ENCODE measurements at regions of chr11 and their contacts with region 1.

Region 1: DNA sequence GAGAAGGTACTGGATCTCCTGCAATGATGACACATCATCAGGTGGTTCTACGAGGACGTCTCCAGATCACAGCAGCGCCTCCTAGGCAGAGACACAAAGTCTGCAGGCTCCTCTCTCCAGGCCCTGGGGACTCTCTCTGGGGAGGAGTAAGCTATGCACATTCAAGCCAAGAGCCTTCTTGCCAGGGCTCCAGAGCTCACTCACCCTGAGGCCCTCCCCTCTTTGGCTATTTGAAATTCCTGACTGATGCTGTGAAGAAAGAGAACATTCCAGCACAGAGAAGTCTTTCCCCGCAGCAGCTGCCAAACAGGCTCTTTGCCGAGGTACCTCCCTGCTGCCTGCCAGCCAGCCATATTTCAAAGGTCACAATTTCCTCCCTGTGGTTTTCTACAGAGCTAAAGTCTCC is 204.9 kb downstream of the CSNK2A3 start:
- DNase-seq: no peak
- ATAC-seq: no peak
- H3K4me3 Mint-ChIP-seq: no peak overlapping the region
- H3K27ac Mint-ChIP-seq: no peak overlapping the region
- H3K4me1 Mint-ChIP-seq: peaks cover 39% of the 10 kb centered on the region
- H3K27me3 Mint-ChIP-seq: no peaks in the 10 kb centered on the region

Region 2: DNA sequence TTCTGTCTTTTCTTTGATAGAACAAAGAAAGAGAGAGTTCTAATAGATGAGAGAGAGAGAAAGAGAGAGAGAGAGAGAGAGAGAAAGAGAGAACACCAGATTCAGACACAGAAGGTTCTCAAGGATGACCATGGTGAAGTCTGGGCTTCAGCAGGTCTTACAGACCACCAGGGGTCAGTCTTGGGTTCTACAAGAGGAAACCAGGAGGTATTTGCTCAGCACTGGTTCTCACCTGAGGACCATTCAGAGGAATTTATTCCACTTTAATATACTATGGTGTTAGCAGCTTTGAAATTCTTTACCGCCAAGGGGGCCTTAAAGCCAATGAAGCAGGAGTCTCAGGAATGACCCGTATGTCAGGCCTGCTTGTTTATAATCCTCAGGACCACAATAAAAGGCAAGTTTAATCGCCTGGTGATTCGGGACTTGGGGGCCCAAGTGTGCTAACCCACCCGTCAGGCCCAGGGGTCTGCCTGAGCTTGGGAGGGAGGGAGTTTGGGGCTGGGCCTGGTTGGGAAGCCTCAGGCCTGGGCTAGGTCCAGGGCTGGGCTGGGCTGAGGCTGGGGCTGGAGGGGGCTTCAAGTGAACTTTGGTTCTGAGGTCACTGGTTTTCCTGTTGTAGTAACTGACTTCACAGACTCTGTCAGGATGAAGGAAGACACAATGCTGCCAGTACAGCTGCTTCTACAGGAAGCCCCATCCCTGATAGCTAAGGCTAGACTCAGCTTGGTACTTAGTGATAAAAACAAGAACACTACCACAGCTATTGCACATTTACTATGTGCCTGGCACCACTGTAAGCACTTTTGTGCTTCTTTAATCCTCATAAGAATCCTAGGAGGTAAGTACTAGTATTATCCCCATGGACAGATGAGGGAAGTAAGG is 111.0 kb before region 1 on chr11:
- CTCF ChIA-PET with region 1: interaction called, 17 read pairs
- POLR2A ChIA-PET with region 1: no interaction called
- DNase-seq: peak; percentile 58
- ATAC-seq: peak; percentile 84
- H3K4me3 Mint-ChIP-seq: no peak overlapping the region
- H3K27ac Mint-ChIP-seq: no peak overlapping the region
- H3K4me1 Mint-ChIP-seq: peaks cover 2% of the 10 kb centered on the region
- H3K27me3 Mint-ChIP-seq: peaks cover 3% of the 10 kb centered on the region